ENCODE measurements at regions of chr1 and their contacts with region 1.

Region 1: DNA sequence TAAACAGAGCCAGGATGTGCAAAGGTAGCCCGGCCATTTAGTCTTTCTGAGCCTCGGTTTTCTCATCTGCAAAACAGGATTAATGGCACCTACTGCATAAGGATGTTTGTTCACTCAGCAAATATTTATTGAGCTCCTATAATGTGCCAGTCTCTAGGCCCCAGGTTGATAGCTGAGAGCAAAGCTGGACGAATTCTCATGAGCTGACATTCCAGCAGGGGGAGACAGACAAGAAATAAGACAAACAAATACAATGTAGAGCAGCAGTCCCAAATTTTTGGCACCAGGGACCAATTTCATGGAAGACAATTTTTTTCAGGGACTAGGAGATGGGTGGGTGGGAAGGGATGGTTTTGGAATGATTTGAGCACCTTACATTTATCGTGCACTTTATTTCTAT is 74.3 kb upstream of the PAX7 start:
- DNase-seq: no peak
- ATAC-seq: no peak
- H3K4me3 Mint-ChIP-seq: no peak overlapping the region
- H3K27ac Mint-ChIP-seq: no peak overlapping the region
- H3K4me1 Mint-ChIP-seq: peaks cover 38% of the 10 kb centered on the region
- H3K27me3 Mint-ChIP-seq: peaks cover 30% of the 10 kb centered on the region
- CTCF ChIP-seq: no peak

Region 2: GRCh38 chr1:18539171-18539570 is 17.2 kb before region 1 on chr1:
- CTCF ChIA-PET with region 1: interaction called, 10 read pairs
- POLR2A ChIA-PET with region 1: no interaction called
- DNase-seq: no peak
- ATAC-seq: no peak
- H3K4me3 Mint-ChIP-seq: no peak overlapping the region
- H3K27ac Mint-ChIP-seq: no peak overlapping the region
- H3K4me1 Mint-ChIP-seq: peaks cover 18% of the 10 kb centered on the region
- H3K27me3 Mint-ChIP-seq: peaks cover 65% of the 10 kb centered on the region
- CTCF ChIP-seq: no peak

Region 3: GRCh38 chr1:18569811-18570545 is 13.6 kb after region 1 on chr1:
- CTCF ChIA-PET with region 1: interaction called, 340 read pairs
- POLR2A ChIA-PET with region 1: no interaction called
- DNase-seq: no peak
- ATAC-seq: peak; percentile 41
- H3K4me3 Mint-ChIP-seq: no peak overlapping the region
- H3K27ac Mint-ChIP-seq: no peak overlapping the region
- H3K4me1 Mint-ChIP-seq: peaks cover 17% of the 10 kb centered on the region
- H3K27me3 Mint-ChIP-seq: peaks cover 10% of the 10 kb centered on the region
- CTCF ChIP-seq: no peak

Measured in WTC11 (cell line).